MCF 10A (cell line): ENCODE measurements at regions of chr4 and their contacts with region 1.

Region 1: GRCh38 chr4:22515145-22515887 is 550 bp downstream of the ADGRA3 start:
- DNase-seq: peak; percentile 82
- H3K4me3 Mint-ChIP-seq: peak overlapping the region; percentile 89
- H3K27ac Mint-ChIP-seq: peak overlapping the region; percentile 89
- H3K4me1 Mint-ChIP-seq: peaks cover 20% of the 10 kb centered on the region
- H3K27me3 Mint-ChIP-seq: no peaks in the 10 kb centered on the region
- CTCF ChIP-seq: no peak

Region 2: GRCh38 chr4:22434895-22435294 is 80.4 kb before region 1 on chr4:
- CTCF ChIA-PET with region 1: no interaction called
- POLR2A ChIA-PET with region 1: interaction called, 9 read pairs
- intact Hi-C with region 1: loop called (anchors 5 kb)
- DNase-seq: peak; percentile 54
- H3K4me3 Mint-ChIP-seq: no peak overlapping the region
- H3K27ac Mint-ChIP-seq: no peak overlapping the region
- H3K4me1 Mint-ChIP-seq: no peaks in the 10 kb centered on the region
- H3K27me3 Mint-ChIP-seq: no peaks in the 10 kb centered on the region
- CTCF ChIP-seq: peak; percentile 32

Region 3: GRCh38 chr4:22473268-22473667 is 42.0 kb before region 1 on chr4:
- CTCF ChIA-PET with region 1: interaction called, 3 read pairs
- POLR2A ChIA-PET with region 1: interaction called, 68 read pairs
- intact Hi-C with region 1: loop called (anchors 2 kb)
- DNase-seq: peak; percentile 88
- H3K4me3 Mint-ChIP-seq: no peak overlapping the region
- H3K27ac Mint-ChIP-seq: no peak overlapping the region
- H3K4me1 Mint-ChIP-seq: peaks cover 37% of the 10 kb centered on the region
- H3K27me3 Mint-ChIP-seq: no peaks in the 10 kb centered on the region
- CTCF ChIP-seq: no peak

Region 4: DNA sequence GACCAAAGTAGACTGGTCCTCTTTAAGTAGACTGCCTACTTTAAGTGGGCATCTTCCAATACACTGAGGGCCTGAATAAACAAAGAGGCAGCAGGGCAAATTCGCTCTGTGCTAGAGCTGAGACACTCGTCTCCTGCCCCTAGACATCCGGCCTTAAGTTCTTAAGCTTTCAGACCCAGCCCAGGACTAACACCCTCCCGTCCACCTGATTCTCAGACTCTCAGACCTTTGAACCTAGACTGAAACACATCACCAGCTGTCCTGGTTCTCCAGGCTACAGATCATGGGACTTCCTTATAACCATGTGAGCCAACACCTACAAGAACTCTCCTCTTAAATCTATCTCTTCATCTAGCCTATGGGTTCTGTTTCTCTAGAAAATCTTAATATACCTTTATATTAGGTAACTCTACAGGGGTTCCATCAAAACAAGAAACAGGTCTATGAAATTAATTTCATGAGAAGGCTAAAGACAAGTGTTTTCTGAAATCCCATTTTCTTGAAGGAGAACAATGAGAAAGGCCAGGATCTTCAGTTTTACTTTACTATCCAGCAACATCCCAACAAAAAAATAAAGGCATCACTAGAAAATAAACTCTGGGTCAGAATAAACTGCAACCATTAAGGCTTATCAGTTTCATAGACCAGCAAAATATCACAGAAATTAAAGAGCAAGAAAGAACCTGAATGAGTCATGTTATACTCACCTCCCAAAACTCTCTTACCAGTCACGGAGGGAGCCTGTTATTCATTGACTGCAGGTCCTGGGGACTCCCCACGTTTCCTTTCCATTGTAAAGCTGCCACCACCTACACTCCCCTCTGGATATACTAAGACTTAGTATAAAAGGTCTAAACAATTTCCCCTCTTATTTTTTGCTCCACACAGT is 14.2 kb before region 1 on chr4:
- CTCF ChIA-PET with region 1: interaction called, 8 read pairs
- POLR2A ChIA-PET with region 1: interaction called, 86 read pairs
- intact Hi-C with region 1: loop called (anchors 2 kb)
- DNase-seq: peak; percentile 87
- H3K4me3 Mint-ChIP-seq: peak overlapping the region; percentile 24
- H3K27ac Mint-ChIP-seq: no peak overlapping the region
- H3K4me1 Mint-ChIP-seq: peaks cover 24% of the 10 kb centered on the region
- H3K27me3 Mint-ChIP-seq: no peaks in the 10 kb centered on the region
- CTCF ChIP-seq: no peak